CD4-positive, alpha-beta memory T cell (primary cell): ENCODE measurements at regions of chrX and their contacts with region 1.

Region 1: DNA sequence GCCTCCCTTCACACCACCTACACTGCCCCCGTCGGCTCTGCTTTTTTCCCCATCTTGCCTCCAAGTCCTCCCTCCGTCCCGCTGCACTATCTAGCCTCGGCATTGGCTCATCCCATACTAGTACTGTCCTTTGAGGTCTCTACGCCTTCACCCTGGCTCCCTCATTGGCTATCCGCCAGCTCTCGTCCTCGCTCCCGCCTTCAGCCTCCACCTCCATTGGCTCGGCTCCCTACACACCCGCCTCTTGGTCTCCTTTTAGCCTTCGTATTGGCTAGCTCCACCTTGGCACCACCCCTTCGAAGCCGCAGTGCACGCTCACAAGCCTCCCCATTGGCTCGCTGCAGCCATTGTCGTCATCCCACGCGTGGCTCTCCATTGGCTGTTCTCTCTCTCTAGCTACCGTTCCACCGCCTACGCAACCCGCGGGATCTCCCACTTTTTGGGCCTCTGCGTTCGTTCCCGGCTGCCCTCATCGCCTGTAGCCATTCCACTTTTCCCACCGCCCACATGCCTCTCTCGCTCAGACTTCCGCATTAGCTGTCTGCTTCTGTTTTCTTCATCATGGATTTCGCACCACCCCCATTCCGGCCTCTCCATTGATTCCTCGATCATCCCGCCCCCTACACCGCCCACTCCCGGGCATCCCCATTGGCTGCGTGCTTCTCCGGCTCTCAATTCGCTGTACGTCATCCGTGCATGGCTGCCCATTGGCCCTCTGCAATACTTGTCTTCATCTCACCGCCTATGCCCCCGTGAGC is 404 bp upstream of the PPP1R3F start:
- DNase-seq: peak; percentile 92 to 98 (median 96)
- H3K4me3 ChIP-seq: peak overlapping the region; percentile 65 to 68
- H3K4me3 Mint-ChIP-seq: peak overlapping the region; percentile 89 to 99 (median 95)
- H3K27ac ChIP-seq: peak overlapping the region; percentile 95
- H3K27ac Mint-ChIP-seq: peak overlapping the region; percentile 99 to 100 (median 100)
- H3K4me1 ChIP-seq: peaks cover 47% of the 10 kb centered on the region
- H3K4me1 Mint-ChIP-seq: peaks cover 21 to 65% (median 47%) of the 10 kb centered on the region in 4 donors
- H3K27me3 ChIP-seq: no peaks in the 10 kb centered on the region
- H3K27me3 Mint-ChIP-seq: no peaks in the 10 kb centered on the region

Region 2: GRCh38 chrX:49073601-49074571 is 195.3 kb before region 1 on chrX and contains the start of gene PRAF2:
- CTCF ChIA-PET with region 1: no interaction called
- POLR2A ChIA-PET with region 1: no interaction called
- intact Hi-C with region 1: loop called (anchors 10 kb)
- DNase-seq: peak; percentile 85 to 93 (median 89)
- H3K4me3 ChIP-seq: peak within 1 kb of the TSS; percentile 36 to 60
- H3K4me3 Mint-ChIP-seq: peak within 1 kb of the TSS; percentile 75 to 86 (median 84)
- H3K27ac ChIP-seq: peak within 1 kb of the TSS; percentile 77
- H3K27ac Mint-ChIP-seq: peak within 1 kb of the TSS; percentile 83 to 93 (median 88)
- H3K4me1 ChIP-seq: peaks cover 20% of the 10 kb centered on the region
- H3K4me1 Mint-ChIP-seq: peaks cover 5 to 28% (median 17%) of the 10 kb centered on the region in 4 donors
- H3K27me3 ChIP-seq: no peaks in the 10 kb centered on the region
- H3K27me3 Mint-ChIP-seq: no peaks in the 10 kb centered on the region
- total RNA-seq, gene PRAF2: 25.4 to 28.9 TPM

Region 3: DNA sequence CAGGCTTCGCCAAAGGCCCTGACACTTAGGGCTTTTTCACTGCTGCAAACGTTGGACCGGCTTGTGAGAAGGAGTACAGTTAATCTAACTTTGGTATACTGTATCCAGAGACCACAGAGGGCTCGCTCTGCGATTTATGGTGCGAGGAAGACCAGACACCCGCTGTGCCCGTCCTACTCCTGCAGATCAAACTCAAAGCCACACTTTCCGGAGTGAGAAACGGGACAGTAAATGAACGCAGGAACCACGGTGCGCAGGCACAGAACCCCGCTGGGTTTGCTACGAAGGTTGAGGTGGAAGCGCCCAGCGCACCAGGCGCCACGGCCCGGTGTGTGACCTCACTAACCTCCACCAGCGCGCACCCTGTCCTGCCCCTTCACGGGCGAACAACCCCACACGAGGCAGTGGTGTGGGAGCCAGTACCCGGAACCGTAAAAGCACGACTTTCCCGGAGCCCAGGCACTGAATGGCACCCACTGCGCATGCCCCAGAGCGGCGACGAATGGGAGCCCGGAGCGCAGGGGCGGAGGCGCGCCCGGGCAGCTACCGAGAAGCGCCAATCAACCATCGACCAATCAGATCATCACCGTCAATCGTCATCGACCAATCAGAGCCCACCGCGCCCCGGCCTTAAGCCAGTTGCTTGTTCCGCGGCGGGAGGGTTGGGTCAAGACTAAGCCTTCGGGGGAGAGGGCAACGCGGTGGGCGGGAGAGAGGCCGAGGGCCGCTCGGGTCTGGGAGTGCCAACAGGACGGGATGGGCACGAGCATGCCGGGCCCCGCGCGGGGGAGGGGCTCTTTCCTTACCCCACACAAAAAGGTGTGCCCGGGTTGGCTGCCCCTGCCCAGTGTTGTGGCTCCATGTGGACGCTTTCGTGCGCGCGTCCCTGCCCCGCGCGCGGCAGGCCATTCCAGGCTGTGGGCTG is 168.2 kb before region 1 on chrX:
- CTCF ChIA-PET with region 1: no interaction called
- POLR2A ChIA-PET with region 1: no interaction called
- intact Hi-C with region 1: no loop called
- DNase-seq: peak; percentile 88 to 91 (median 89)
- H3K4me3 ChIP-seq: peak overlapping the region; percentile 22 to 71
- H3K4me3 Mint-ChIP-seq: peak overlapping the region; percentile 87 to 92 (median 90)
- H3K27ac ChIP-seq: peak overlapping the region; percentile 76
- H3K27ac Mint-ChIP-seq: peak overlapping the region; percentile 93 to 97 (median 94)
- H3K4me1 ChIP-seq: peaks cover 6% of the 10 kb centered on the region
- H3K4me1 Mint-ChIP-seq: peaks cover 0 to 9% (median 4%) of the 10 kb centered on the region in 4 donors
- H3K27me3 ChIP-seq: no peaks in the 10 kb centered on the region
- H3K27me3 Mint-ChIP-seq: no peaks in the 10 kb centered on the region

Region 4: GRCh38 chrX:49199906-49200771 is 69.0 kb before region 1 on chrX and contains the start of gene SYP:
- CTCF ChIA-PET with region 1: no interaction called
- POLR2A ChIA-PET with region 1: interaction called, 4 read pairs
- intact Hi-C with region 1: loop called (anchors 1 kb)
- DNase-seq: peak; percentile 86 to 89 (median 87)
- H3K4me3 ChIP-seq: no peak within 1 kb of the TSS
- H3K4me3 Mint-ChIP-seq: peak within 1 kb of the TSS; percentile 57 to 77 (median 64)
- H3K27ac ChIP-seq: no peak within 1 kb of the TSS
- H3K27ac Mint-ChIP-seq: peak within 1 kb of the TSS; percentile 5 to 86 (median 58)
- H3K4me1 ChIP-seq: peaks cover 13% of the 10 kb centered on the region
- H3K4me1 Mint-ChIP-seq: peaks cover 7 to 18% (median 12%) of the 10 kb centered on the region in 4 donors
- H3K27me3 ChIP-seq: no peaks in the 10 kb centered on the region
- H3K27me3 Mint-ChIP-seq: peaks cover 0 to 1% of the 10 kb centered on the region in 2 donors
- total RNA-seq, gene SYP: 0.50 to 0.73 TPM

Region 5: GRCh38 chrX:49230469-49231232 is 38.5 kb before region 1 on chrX:
- CTCF ChIA-PET with region 1: no interaction called
- POLR2A ChIA-PET with region 1: interaction called, 9 read pairs
- intact Hi-C with region 1: loop called (anchors 1 kb)
- DNase-seq: peak; percentile 29 to 58 (median 47)
- H3K4me3 ChIP-seq: peak overlapping the region in 1 of 2 donors; percentile 43
- H3K4me3 Mint-ChIP-seq: peak overlapping the region; percentile 76 to 84 (median 81)
- H3K27ac ChIP-seq: peak overlapping the region; percentile 58
- H3K27ac Mint-ChIP-seq: peak overlapping the region; percentile 81 to 95 (median 92)
- H3K4me1 ChIP-seq: peaks cover 17% of the 10 kb centered on the region
- H3K4me1 Mint-ChIP-seq: peaks cover 9 to 26% (median 12%) of the 10 kb centered on the region in 4 donors
- H3K27me3 ChIP-seq: no peaks in the 10 kb centered on the region
- H3K27me3 Mint-ChIP-seq: no peaks in the 10 kb centered on the region

Region 6: GRCh38 chrX:49257846-49258748 is 11.1 kb before region 1 on chrX:
- CTCF ChIA-PET with region 1: interaction called, 3 read pairs
- POLR2A ChIA-PET with region 1: interaction called, 36 read pairs
- intact Hi-C with region 1: no loop called
- DNase-seq: peak in 2 of 5 donors; percentile 23 to 53
- H3K4me3 ChIP-seq: no peak overlapping the region
- H3K4me3 Mint-ChIP-seq: peak overlapping the region in 7 of 8 donors; percentile 13 to 71 (median 49)
- H3K27ac ChIP-seq: peak overlapping the region; percentile 38
- H3K27ac Mint-ChIP-seq: peak overlapping the region; percentile 5 to 91 (median 75)
- H3K4me1 ChIP-seq: peaks cover 43% of the 10 kb centered on the region
- H3K4me1 Mint-ChIP-seq: peaks cover 17 to 40% (median 26%) of the 10 kb centered on the region in 4 donors
- H3K27me3 ChIP-seq: no peaks in the 10 kb centered on the region
- H3K27me3 Mint-ChIP-seq: no peaks in the 10 kb centered on the region

Region 7: GRCh38 chrX:49309401-49309981 is 40.3 kb after region 1 on chrX:
- CTCF ChIA-PET with region 1: interaction called, 3 read pairs
- POLR2A ChIA-PET with region 1: interaction called, 28 read pairs
- intact Hi-C with region 1: loop called (anchors 5 kb)
- DNase-seq: peak; percentile 28 to 47 (median 40)
- H3K4me3 ChIP-seq: peak overlapping the region; percentile 23 to 57
- H3K4me3 Mint-ChIP-seq: peak overlapping the region; percentile 85 to 94 (median 88)
- H3K27ac ChIP-seq: peak overlapping the region; percentile 47
- H3K27ac Mint-ChIP-seq: peak overlapping the region; percentile 90 to 97 (median 93)
- H3K4me1 ChIP-seq: peaks cover 17% of the 10 kb centered on the region
- H3K4me1 Mint-ChIP-seq: peaks cover 19 to 29% (median 20%) of the 10 kb centered on the region in 4 donors
- H3K27me3 ChIP-seq: no peaks in the 10 kb centered on the region
- H3K27me3 Mint-ChIP-seq: no peaks in the 10 kb centered on the region

Region 8: GRCh38 chrX:49637686-49638085 is 368.5 kb after region 1 on chrX:
- CTCF ChIA-PET with region 1: no interaction called
- POLR2A ChIA-PET with region 1: no interaction called
- intact Hi-C with region 1: no loop called
- DNase-seq: no peak
- H3K4me3 ChIP-seq: no peak overlapping the region
- H3K4me3 Mint-ChIP-seq: no peak overlapping the region
- H3K27ac ChIP-seq: no peak overlapping the region
- H3K27ac Mint-ChIP-seq: no peak overlapping the region
- H3K4me1 ChIP-seq: no peaks in the 10 kb centered on the region
- H3K4me1 Mint-ChIP-seq: no peaks in the 10 kb centered on the region
- H3K27me3 ChIP-seq: no peaks in the 10 kb centered on the region
- H3K27me3 Mint-ChIP-seq: no peaks in the 10 kb centered on the region